PC-9 (cell line): ENCODE measurements at regions of chr11 and their contacts with region 1.

Region 1: GRCh38 chr11:48307760-48308386 is 1.9 kb downstream of the OR4S1 start:
- DNase-seq: peak; percentile 45 to 61
- H3K4me3 ChIP-seq: no peak overlapping the region
- H3K27ac ChIP-seq: no peak overlapping the region
- H3K4me1 ChIP-seq: no peaks in the 10 kb centered on the region
- H3K27me3 ChIP-seq: no peaks in the 10 kb centered on the region
- CTCF ChIP-seq: peak; percentile 96

Region 2: GRCh38 chr11:48150213-48150612 is 157.7 kb before region 1 on chr11:
- CTCF ChIA-PET with region 1: no interaction called
- POLR2A ChIA-PET with region 1: no interaction called
- intact Hi-C with region 1: no loop called
- DNase-seq: no peak
- H3K4me3 ChIP-seq: no peak overlapping the region
- H3K27ac ChIP-seq: no peak overlapping the region
- H3K4me1 ChIP-seq: no peaks in the 10 kb centered on the region
- H3K27me3 ChIP-seq: no peaks in the 10 kb centered on the region
- CTCF ChIP-seq: no peak

Region 3: DNA sequence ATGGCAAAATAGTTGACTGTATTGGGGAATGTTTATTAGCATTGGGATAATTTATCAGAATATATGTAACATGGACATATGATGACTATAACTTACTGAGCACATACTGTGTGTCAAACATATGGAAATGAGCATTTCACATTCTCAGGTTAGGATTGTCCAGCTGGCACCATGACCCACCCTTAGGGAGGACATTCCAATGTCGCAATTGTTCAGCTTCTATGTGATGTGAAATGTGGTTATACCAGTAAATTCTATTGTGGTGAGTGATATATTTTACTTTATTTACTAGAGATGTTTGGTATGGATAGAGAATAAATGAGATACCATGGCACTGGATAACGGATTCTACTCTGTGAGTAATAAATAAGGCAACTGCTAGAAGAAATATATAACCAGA is 231.1 kb after region 1 on chr11:
- CTCF ChIA-PET with region 1: no interaction called
- POLR2A ChIA-PET with region 1: no interaction called
- intact Hi-C with region 1: no loop called
- DNase-seq: peak in 1 of 2 experiments; percentile 37
- H3K4me3 ChIP-seq: no peak overlapping the region
- H3K27ac ChIP-seq: no peak overlapping the region
- H3K4me1 ChIP-seq: no peaks in the 10 kb centered on the region
- H3K27me3 ChIP-seq: no peaks in the 10 kb centered on the region
- CTCF ChIP-seq: no peak

Region 4: GRCh38 chr11:49533204-49533603 is 1225.3 kb after region 1 on chr11:
- CTCF ChIA-PET with region 1: no interaction called
- POLR2A ChIA-PET with region 1: no interaction called
- intact Hi-C with region 1: loop called (anchors 5 kb)
- DNase-seq: no peak
- H3K4me3 ChIP-seq: no peak overlapping the region
- H3K27ac ChIP-seq: no peak overlapping the region
- H3K4me1 ChIP-seq: no peaks in the 10 kb centered on the region
- H3K27me3 ChIP-seq: no peaks in the 10 kb centered on the region
- CTCF ChIP-seq: no peak